Naive thymus-derived CD4-positive, alpha-beta T cell (primary cell): ENCODE measurements at regions of chr19 and their contacts with region 1.

Region 1: GRCh38 chr19:14198384-14199376 is 7.3 kb downstream of the ADGRL1 start:
- DNase-seq: no peak
- ATAC-seq: no peak
- H3K4me3 ChIP-seq: no peak overlapping the region
- H3K4me3 Mint-ChIP-seq: no peak overlapping the region
- H3K27ac ChIP-seq: no peak overlapping the region
- H3K27ac Mint-ChIP-seq: no peak overlapping the region
- H3K4me1 ChIP-seq: peaks cover 0 to 4% of the 10 kb centered on the region in 2 donors
- H3K4me1 Mint-ChIP-seq: peaks cover 19 to 45% (median 34%) of the 10 kb centered on the region in 7 donors
- H3K27me3 ChIP-seq: no peaks in the 10 kb centered on the region
- H3K27me3 Mint-ChIP-seq: peaks cover 0 to 11% (median 0%) of the 10 kb centered on the region in 5 donors

Region 2: GRCh38 chr19:13905938-13906904 is 292.5 kb before region 1 on chr19 and contains the starts of genes BRME1 and CC2D1A:
- CTCF ChIA-PET with region 1: no interaction called
- POLR2A ChIA-PET with region 1: no interaction called
- intact Hi-C with region 1: no loop called
- DNase-seq: peak; percentile 87 to 94 (median 92)
- ATAC-seq: peak; percentile 100
- H3K4me3 ChIP-seq: peak within 1 kb of the TSS; percentile 84
- H3K4me3 Mint-ChIP-seq: peak within 1 kb of the TSS; percentile 84 to 94 (median 88)
- H3K27ac ChIP-seq: peak within 1 kb of the TSS; percentile 77
- H3K27ac Mint-ChIP-seq: peak within 1 kb of the TSS; percentile 83 to 94 (median 91)
- H3K4me1 ChIP-seq: peaks cover 12% of the 10 kb centered on the region in 2 donors
- H3K4me1 Mint-ChIP-seq: peaks cover 12 to 29% (median 16%) of the 10 kb centered on the region in 7 donors
- H3K27me3 ChIP-seq: no peaks in the 10 kb centered on the region
- H3K27me3 Mint-ChIP-seq: no peaks in the 10 kb centered on the region
- total RNA-seq, gene BRME1: 1.8 to 13.7 (median 2.9) TPM
- total RNA-seq, gene CC2D1A: 21.0 to 33.1 (median 29.8) TPM

Region 3: GRCh38 chr19:14147797-14148605 is 50.7 kb before region 1 on chr19:
- CTCF ChIA-PET with region 1: interaction called, 3 read pairs
- POLR2A ChIA-PET with region 1: interaction called, 4 read pairs
- intact Hi-C with region 1: loop called (anchors 2 to 5 kb)
- DNase-seq: peak in 7 of 9 donors; percentile 23 to 51 (median 38)
- ATAC-seq: peak; percentile 79
- H3K4me3 ChIP-seq: no peak overlapping the region
- H3K4me3 Mint-ChIP-seq: peak overlapping the region in 9 of 10 donors; percentile 57 to 95 (median 82)
- H3K27ac ChIP-seq: peak overlapping the region; percentile 91
- H3K27ac Mint-ChIP-seq: peak overlapping the region; percentile 92 to 99 (median 99)
- H3K4me1 ChIP-seq: peaks cover 23 to 30% of the 10 kb centered on the region in 2 donors
- H3K4me1 Mint-ChIP-seq: peaks cover 13 to 67% (median 44%) of the 10 kb centered on the region in 7 donors
- H3K27me3 ChIP-seq: no peaks in the 10 kb centered on the region
- H3K27me3 Mint-ChIP-seq: no peaks in the 10 kb centered on the region

Region 4: DNA sequence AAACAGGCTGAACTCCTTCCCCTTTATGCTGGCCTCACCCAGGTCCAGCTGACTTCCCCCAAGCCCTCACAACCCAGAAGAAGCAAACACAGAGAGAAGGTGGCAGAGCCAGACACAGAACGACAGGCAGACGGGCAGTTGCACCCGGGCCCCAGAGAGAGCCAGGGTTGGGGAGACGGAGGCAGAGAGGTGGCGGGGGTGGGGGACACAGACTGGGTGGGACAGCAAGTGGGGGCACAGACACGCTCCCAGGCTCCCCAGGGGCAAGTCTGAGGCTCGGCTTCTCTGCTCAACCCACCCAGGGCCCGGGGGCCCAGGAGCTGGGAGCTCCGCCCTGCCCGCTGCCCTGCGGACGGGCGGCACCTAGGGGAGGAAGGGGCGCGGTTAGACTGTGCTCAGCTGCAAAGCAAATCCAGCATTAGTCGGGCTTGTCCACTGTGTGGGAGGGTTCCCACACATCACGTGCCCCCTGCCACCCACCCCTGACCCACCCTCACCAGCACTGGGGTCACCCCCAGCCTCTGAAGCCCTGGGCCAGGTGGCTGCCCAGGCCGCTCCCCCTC is 31.0 kb before region 1 on chr19:
- CTCF ChIA-PET with region 1: no interaction called
- POLR2A ChIA-PET with region 1: no interaction called
- intact Hi-C with region 1: no loop called
- DNase-seq: peak in 6 of 9 donors; percentile 15 to 49 (median 32)
- ATAC-seq: peak; percentile 80
- H3K4me3 ChIP-seq: peak overlapping the region; percentile 50
- H3K4me3 Mint-ChIP-seq: peak overlapping the region; percentile 75 to 97 (median 88)
- H3K27ac ChIP-seq: peak overlapping the region; percentile 68
- H3K27ac Mint-ChIP-seq: peak overlapping the region; percentile 77 to 97 (median 94)
- H3K4me1 ChIP-seq: peaks cover 11 to 15% of the 10 kb centered on the region in 2 donors
- H3K4me1 Mint-ChIP-seq: peaks cover 18 to 31% (median 26%) of the 10 kb centered on the region in 7 donors
- H3K27me3 ChIP-seq: no peaks in the 10 kb centered on the region
- H3K27me3 Mint-ChIP-seq: no peaks in the 10 kb centered on the region

Region 5: DNA sequence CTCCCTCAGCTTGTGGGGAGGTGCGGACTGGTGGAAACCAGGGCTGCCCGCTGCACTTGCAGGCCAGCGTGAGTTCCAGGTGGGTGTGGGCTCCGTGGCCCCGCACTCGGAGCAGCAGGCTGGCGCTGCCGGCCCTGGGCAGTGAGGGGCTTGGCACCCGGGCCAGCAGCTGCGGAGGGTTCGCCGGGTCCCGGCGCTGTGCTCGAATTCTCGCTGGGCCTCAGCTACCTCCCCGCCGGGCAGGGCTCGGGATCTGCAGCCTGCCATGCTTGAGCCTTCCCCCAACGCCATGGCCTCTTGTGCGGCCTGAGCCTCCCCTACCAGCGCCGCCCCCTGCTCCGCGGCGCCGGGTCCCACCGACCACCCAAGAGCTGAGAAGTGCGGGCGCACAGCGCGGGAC is 78.9 kb after region 1 on chr19:
- CTCF ChIA-PET with region 1: no interaction called
- POLR2A ChIA-PET with region 1: no interaction called
- intact Hi-C with region 1: loop called in 1 of 2 experiments (anchors 10 kb)
- DNase-seq: no peak
- ATAC-seq: no peak
- H3K4me3 ChIP-seq: no peak overlapping the region
- H3K4me3 Mint-ChIP-seq: no peak overlapping the region
- H3K27ac ChIP-seq: no peak overlapping the region
- H3K27ac Mint-ChIP-seq: no peak overlapping the region
- H3K4me1 ChIP-seq: peaks cover 0 to 8% of the 10 kb centered on the region in 2 donors
- H3K4me1 Mint-ChIP-seq: peaks cover 5 to 21% (median 14%) of the 10 kb centered on the region in 7 donors
- H3K27me3 ChIP-seq: no peaks in the 10 kb centered on the region
- H3K27me3 Mint-ChIP-seq: peaks cover 0 to 3% (median 0%) of the 10 kb centered on the region in 5 donors

Region 6: GRCh38 chr19:14405758-14406644 is 207.3 kb after region 1 on chr19:
- CTCF ChIA-PET with region 1: interaction called, 3 read pairs
- POLR2A ChIA-PET with region 1: no interaction called
- intact Hi-C with region 1: loop called in 1 of 2 experiments (anchors 5 kb)
- DNase-seq: peak; percentile 85 to 96 (median 91)
- ATAC-seq: peak; percentile 76
- H3K4me3 ChIP-seq: no peak overlapping the region
- H3K4me3 Mint-ChIP-seq: peak overlapping the region in 1 of 10 donors; percentile 12
- H3K27ac ChIP-seq: peak overlapping the region; percentile 54
- H3K27ac Mint-ChIP-seq: peak overlapping the region; percentile 58 to 85 (median 60)
- H3K4me1 ChIP-seq: peaks cover 8 to 25% of the 10 kb centered on the region in 2 donors
- H3K4me1 Mint-ChIP-seq: peaks cover 6 to 26% (median 20%) of the 10 kb centered on the region in 7 donors
- H3K27me3 ChIP-seq: no peaks in the 10 kb centered on the region
- H3K27me3 Mint-ChIP-seq: no peaks in the 10 kb centered on the region

Region 7: DNA sequence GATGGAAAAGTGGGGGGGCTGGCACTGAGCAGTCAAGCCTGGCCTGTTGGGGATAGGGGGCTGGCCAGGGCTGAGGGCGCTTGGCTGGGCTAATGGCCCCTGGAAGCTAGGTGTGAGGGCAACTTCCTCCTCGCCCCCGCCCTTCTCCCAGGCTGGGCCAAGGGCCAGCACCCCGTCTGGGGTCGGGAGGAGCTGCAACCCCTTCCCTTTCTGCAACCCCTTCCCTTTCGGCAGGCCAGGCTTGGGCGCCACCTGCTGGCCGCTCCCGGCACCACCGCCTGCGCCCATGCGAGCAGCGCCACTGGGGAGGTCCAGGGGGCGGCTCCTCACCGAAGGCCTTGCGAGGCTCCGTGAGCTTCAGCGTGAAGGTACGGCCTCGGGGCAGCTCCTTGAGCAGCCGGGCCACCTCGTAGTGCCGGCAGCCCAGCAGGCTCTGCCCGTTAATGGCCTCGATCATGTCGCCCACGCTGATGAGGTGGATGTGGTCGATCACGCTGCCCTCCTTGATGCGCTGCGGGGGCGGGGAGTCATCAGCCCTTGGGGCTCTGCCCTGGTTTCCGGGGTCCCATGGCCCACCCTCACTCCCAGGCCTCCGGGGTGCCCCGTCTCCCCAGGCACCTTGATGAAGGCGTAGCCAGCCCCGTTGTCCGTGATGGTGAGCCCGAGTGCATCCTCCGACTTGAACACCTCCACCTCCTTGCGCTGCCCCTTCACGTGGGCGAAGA is 281.5 kb after region 1 on chr19:
- CTCF ChIA-PET with region 1: no interaction called
- POLR2A ChIA-PET with region 1: no interaction called
- intact Hi-C with region 1: loop called in 1 of 2 experiments (anchors 10 kb)
- DNase-seq: peak; percentile 47 to 87 (median 65)
- ATAC-seq: peak; percentile 67
- H3K4me3 ChIP-seq: no peak overlapping the region
- H3K4me3 Mint-ChIP-seq: no peak overlapping the region
- H3K27ac ChIP-seq: no peak overlapping the region
- H3K27ac Mint-ChIP-seq: no peak overlapping the region
- H3K4me1 ChIP-seq: peaks cover under 1% of the 10 kb centered on the region in 2 donors
- H3K4me1 Mint-ChIP-seq: peaks cover 0 to 17% (median 11%) of the 10 kb centered on the region in 7 donors
- H3K27me3 ChIP-seq: no peaks in the 10 kb centered on the region
- H3K27me3 Mint-ChIP-seq: peaks cover 0 to under 1% (median 0%) of the 10 kb centered on the region in 5 donors